Activated CD4-positive, alpha-beta T cell treated with anti-CD3 and anti-CD28 coated beads for 36 hours (primary cell): ENCODE measurements at regions of chr19 and their contacts with region 1.

Region 1: DNA sequence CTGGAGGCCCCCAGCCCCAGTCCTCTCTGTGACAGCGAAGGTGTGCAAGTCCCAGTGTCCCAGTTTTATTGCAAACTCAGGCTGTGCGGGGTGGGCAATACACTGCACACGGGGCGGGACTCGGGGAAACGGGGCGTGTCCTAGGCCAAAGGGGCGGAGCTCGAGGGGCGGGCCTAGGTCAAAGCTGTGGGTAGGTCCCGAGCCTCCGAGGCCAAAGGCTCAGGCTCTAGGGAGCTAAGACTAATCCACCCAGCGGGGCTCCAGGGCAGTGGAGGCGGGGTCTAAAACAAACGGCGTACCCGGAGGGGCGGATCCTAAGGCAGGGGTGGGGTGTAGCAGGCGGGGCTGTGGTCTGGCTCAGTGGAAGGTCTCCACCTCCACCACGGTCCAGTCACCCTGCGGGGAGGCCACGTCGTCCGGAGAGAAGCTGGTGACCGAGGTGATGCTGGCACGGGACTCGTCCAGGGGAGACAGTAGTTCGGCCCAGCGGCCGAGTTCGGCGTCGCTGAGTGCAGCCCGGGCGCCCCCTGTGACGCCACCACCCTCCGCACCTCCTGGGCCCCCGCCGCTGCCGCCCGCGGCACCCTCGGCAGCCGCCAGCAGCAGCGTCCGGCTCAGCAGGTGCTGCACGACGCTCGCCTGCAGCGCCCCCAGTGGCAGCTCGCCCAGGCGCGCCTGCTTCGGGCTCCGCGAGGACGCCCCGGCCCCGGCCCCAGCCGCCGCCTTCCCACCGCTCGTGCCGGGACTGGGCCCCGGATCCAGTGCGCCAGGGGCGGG is 5.3 kb downstream of the PRR36 start:
- DNase-seq: peak; percentile 92
- ATAC-seq: peak; percentile 75
- H3K4me3 Mint-ChIP-seq: peak overlapping the region; percentile 70
- H3K27ac Mint-ChIP-seq: peak overlapping the region; percentile 51
- H3K4me1 Mint-ChIP-seq: peaks cover 47% of the 10 kb centered on the region
- H3K27me3 Mint-ChIP-seq: peaks cover 29% of the 10 kb centered on the region

Region 2: GRCh38 chr19:7636691-7637373 is 232.0 kb before region 1 on chr19 and contains the start of gene STXBP2:
- CTCF ChIA-PET with region 1: no interaction called
- POLR2A ChIA-PET with region 1: no interaction called
- intact Hi-C with region 1: loop called in 1 of 2 experiments (anchors 2 kb)
- DNase-seq: peak; percentile 96
- ATAC-seq: peak; percentile 97
- H3K4me3 Mint-ChIP-seq: peak within 1 kb of the TSS; percentile 78
- H3K27ac Mint-ChIP-seq: peak within 1 kb of the TSS; percentile 86
- H3K4me1 Mint-ChIP-seq: peaks cover 22% of the 10 kb centered on the region
- H3K27me3 Mint-ChIP-seq: no peaks in the 10 kb centered on the region
- total RNA-seq, gene STXBP2: 75.2 to 83.0 TPM

Region 3: DNA sequence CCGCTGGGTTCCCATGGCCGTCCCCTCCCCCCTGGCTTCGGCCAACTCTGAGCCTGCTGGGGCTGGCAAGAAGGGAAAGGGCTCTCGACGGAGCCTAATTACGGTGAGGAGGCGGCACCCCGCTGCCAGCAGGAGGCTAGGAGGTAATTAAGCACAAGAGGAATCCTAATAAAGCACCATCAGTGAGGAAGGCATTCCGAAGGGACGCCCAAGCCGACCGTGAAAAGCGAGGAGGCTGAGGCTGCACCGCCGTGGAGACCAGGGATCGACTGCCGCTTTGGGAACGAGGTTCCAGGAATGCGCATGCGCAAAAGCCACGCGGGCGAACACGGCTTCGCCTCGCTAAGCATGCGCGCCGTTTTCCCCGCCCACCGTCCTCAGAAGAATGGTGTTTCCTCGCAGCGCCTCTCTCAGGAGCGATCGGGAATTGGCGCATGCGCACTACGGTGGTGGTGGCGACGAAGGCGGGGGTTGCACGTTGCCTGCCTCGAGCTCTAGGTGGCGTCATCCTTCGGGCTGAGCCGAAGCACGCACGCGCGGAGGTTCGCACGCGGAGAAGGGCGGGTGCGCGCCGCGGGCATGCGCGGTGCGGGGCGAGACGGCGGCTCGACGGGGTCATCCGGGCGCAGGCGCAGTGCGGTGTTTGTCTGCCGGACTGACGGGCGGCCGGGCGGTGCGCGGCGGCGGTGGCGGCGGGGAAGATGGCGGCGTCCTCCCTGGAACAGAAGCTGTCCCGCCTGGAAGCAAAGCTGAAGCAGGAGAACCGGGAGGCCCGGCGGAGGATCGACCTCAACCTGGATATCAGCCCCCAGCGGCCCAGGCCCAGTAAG is 34.6 kb after region 1 on chr19 and contains the start of gene MAP2K7:
- CTCF ChIA-PET with region 1: interaction called, 16 read pairs
- POLR2A ChIA-PET with region 1: no interaction called
- intact Hi-C with region 1: loop called (anchors 1 kb)
- DNase-seq: peak; percentile 100
- ATAC-seq: peak; percentile 91
- H3K4me3 Mint-ChIP-seq: peak within 1 kb of the TSS; percentile 85
- H3K27ac Mint-ChIP-seq: peak within 1 kb of the TSS; percentile 92
- H3K4me1 Mint-ChIP-seq: peaks cover 22% of the 10 kb centered on the region
- H3K27me3 Mint-ChIP-seq: no peaks in the 10 kb centered on the region
- total RNA-seq, gene MAP2K7: 32.2 to 33.7 TPM

Region 4: DNA sequence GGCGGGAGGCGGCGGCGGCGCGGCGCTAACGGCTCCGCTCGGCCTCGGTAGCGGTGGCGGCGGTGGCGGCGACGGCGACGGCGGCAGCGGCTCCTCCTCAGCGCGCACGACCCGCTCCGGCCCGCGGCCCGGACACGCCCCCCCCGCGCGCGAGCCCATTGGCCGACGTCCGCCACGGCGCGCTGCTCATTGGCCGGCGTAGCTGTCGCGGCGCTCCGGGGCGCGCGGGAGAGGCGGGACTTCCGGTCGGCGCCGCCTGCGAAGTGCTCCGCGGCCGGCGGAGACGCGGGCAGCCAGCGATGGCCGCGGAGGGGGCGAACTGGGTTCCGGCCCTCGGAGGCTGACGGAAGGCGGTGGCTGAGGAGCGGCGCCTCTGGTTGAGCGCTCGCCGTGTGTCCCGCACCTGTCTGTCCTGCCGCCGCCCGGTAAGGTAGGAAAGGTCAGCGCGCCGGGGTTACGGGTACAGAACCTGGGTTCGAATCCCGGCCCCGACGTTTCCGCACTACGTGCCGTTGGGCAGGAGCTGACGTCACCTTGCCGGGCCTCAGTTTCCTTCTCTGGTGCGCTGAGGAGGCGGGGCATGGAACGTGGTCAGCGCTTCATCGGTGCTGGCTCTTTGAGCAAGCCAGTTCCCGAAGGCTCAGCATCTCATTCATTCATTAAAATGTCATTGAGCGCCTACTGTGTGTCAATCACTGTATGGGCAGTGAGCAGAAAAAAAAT is 136.8 kb after region 1 on chr19 and contains the start of gene ELAVL1:
- CTCF ChIA-PET with region 1: no interaction called
- POLR2A ChIA-PET with region 1: no interaction called
- intact Hi-C with region 1: loop called in 1 of 2 experiments (anchors 2 kb)
- DNase-seq: peak; percentile 95
- ATAC-seq: peak; percentile 93
- H3K4me3 Mint-ChIP-seq: peak within 1 kb of the TSS; percentile 95
- H3K27ac Mint-ChIP-seq: peak within 1 kb of the TSS; percentile 94
- H3K4me1 Mint-ChIP-seq: peaks cover 36% of the 10 kb centered on the region
- H3K27me3 Mint-ChIP-seq: no peaks in the 10 kb centered on the region
- total RNA-seq, gene ELAVL1: 149 to 184 TPM

Region 5: GRCh38 chr19:8412783-8413628 is 544.1 kb after region 1 on chr19 and contains the start of gene MARCHF2:
- CTCF ChIA-PET with region 1: no interaction called
- POLR2A ChIA-PET with region 1: no interaction called
- intact Hi-C with region 1: loop called in 1 of 2 experiments (anchors 1 kb)
- DNase-seq: peak; percentile 97
- ATAC-seq: peak; percentile 100
- H3K4me3 Mint-ChIP-seq: peak within 1 kb of the TSS; percentile 50
- H3K27ac Mint-ChIP-seq: no peak within 1 kb of the TSS
- H3K4me1 Mint-ChIP-seq: peaks cover 5% of the 10 kb centered on the region
- H3K27me3 Mint-ChIP-seq: no peaks in the 10 kb centered on the region
- total RNA-seq, gene MARCHF2: 9.1 to 10.1 TPM